AG04449 (cell line): ENCODE measurements at regions of chr20 and their contacts with region 1.

Region 1: DNA sequence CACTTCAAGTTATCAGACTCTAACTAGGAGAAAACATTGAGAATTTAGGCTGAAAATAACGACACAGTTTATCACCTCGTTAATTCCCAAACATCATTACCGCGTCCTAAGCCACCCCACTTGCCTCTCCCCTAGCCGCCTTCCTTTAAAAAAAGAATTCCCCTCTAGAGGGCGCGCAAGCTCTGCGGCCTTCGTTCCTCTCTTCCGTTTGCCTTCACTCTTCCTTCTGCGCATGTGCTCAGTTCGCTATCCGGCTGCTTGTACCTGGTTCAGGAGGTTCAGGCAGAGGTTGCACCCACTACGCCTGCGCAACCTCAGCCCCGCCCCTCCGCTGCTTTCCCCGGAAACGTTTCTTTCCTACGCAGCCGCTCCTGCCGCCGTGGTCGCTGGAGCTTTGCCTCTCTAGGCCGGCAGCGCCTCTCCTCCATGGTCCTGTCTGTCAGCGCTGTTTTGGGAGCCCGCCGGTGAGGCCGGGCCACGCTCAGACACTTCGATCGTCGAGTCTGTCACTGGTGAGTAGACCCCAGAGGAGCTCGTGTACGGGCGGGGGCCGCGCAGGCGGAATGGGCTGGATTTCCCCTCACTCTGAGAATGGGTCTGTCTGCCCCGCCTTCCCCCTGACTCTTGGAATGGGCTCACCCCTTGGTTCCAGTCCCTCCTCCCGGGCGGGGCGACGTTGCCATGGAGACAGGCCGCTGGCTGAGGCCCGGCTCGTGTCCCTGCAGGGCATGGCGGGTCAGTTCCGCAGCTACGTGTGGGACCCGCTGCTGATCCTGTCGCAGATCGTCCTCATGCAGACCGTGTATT is at the start of gene SYS1:
- DNase-seq: peak; percentile 90
- H3K4me3 ChIP-seq: peak within 1 kb of the TSS; percentile 96
- CTCF ChIP-seq: peak; percentile 87

Region 2: DNA sequence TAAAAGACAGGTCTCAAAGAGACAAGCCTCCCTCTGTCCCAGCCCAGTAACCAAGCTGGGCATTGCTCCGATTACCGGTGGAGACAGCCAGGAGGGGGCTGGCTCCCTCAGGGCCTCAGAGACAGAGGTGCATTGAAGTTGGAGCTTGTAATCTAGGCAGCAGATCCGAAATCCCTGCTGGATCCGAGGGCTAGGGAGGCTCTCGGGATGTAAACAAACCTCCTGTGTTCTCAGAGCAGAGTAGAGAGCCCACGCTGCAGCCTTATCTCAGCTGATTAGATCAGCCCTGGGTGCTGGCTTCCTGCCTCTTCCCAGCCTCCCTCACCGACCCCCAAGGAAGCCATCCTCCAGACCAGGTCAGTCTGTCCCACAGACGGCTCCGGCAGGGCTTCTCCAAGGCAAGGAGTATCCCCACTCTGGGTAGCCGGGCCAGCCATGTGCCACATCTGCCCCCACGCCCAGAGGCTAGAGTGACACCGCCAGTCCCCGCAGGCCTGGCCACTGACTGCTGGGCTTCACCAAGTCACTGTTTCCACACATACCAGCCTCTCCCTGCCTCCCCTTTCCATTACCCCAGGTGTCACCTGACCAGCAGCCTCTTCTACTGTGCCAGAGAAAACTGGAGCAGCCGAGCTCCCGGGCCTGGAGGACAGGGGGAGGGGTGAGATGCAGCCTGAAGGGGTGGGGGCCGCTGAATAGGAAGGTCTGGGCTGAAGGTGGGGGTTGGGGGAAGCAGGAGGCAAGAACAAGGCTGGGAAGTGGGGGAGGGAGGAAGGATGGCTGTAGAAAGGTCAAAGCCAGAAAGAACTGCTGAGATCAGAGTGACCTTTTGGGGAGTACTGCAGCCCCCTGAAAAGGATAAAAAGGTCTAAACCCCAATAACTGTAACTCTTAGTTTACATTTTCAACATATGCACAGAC is 20.8 kb before region 1 on chr20:
- CTCF ChIA-PET with region 1: interaction called, 60 read pairs
- POLR2A ChIA-PET with region 1: interaction called, 86 read pairs
- DNase-seq: no peak
- H3K4me3 ChIP-seq: peak overlapping the region; percentile 35
- CTCF ChIP-seq: no peak

Region 3: GRCh38 chr20:45373353-45374100 is 10.5 kb after region 1 on chr20:
- CTCF ChIA-PET with region 1: interaction called, 191 read pairs
- POLR2A ChIA-PET with region 1: interaction called, 5 read pairs
- DNase-seq: no peak
- H3K4me3 ChIP-seq: peak overlapping the region; percentile 55
- CTCF ChIP-seq: peak; percentile 95

Region 4: DNA sequence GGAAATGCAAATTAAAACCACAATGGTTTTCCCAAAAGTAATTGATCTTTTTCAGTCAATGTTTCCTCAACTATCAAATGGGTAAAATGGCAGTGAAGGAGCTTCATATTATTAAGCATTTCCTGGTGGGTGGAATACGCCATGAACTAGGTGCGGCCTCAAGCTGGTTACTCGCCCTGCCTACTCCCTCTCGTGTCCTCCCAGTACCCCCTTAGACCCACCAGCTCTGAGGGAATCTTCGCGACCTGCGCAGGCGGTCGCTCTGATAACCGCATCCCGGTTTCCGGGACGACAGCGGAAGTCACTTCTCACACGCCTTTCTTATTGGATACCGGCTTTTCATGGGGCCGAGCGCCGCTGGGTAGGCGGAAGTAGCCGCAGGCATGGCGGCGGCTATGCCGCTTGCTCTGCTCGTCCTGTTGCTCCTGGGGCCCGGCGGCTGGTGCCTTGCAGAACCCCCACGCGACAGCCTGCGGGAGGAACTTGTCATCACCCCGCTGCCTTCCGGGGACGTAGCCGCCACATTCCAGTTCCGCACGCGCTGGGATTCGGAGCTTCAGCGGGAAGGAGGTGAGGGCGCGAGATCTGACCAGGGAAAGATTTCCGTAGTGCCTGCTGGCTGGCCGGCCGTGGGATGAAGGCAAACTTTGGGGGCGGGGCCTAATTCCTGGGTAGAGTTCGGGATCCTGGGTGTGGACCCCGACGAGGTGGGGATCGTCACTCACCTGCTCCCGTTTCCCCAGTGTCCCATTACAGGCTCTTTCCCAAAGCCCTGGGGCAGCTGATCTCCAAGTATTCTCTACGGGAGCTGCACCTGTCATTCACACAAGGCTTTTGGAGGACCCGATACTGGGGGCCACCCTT is 53.0 kb after region 1 on chr20 and contains the start of gene PIGT:
- CTCF ChIA-PET with region 1: interaction called, 11 read pairs
- POLR2A ChIA-PET with region 1: interaction called, 4 read pairs
- DNase-seq: no peak
- H3K4me3 ChIP-seq: peak within 1 kb of the TSS; percentile 97
- CTCF ChIP-seq: no peak

Region 5: GRCh38 chr20:45507011-45507820 is 144.2 kb after region 1 on chr20:
- CTCF ChIA-PET with region 1: no interaction called
- POLR2A ChIA-PET with region 1: no interaction called
- DNase-seq: no peak
- H3K4me3 ChIP-seq: no peak overlapping the region
- CTCF ChIP-seq: no peak